ENCODE measurements at regions of chr3 and their contacts with region 1.

Region 1: DNA sequence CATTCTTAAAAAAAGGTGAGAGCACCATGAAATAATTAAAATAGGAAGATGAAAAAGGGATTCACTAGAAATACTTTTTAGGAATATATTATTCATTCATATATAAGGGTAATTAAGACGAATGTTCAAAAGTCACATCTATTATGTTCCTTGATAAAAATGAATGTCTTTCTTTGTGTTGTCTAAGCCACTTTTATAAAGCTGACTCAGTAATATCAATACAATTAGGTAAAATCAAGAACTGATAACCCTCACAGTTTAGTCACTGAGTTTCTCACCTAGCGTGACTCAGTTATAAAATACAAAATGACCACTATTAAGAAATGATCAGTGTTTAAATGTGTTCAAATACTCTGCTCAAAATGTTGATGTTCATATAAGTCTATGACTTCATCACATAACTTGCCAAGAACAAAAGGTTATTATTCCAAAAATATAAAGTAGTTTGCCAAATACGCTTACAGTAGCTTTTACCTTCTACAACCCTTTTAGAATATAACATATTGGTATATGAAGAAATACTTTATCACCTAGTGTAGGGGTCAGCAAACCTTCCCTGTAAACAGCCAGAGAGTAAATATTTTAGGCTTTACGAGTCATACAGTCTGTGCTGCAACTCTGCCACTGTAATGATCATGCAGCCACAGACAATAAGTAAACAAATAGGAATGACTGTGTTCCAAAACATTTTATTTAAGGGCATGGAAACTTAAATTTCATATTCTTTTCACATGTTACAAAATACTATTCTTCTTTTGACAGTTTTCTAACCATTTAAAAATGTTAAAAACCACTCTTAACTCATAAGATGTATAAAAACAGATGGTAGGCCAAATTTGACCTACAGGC is 369.8 kb downstream of the TBC1D5 start:
- ATAC-seq: no peak
- H3K4me3 ChIP-seq: no peak overlapping the region
- H3K27ac ChIP-seq: no peak overlapping the region
- H3K4me1 ChIP-seq: no peaks in the 10 kb centered on the region

Region 2: GRCh38 chr3:17313746-17314145 is 58.8 kb before region 1 on chr3:
- in situ Hi-C with region 1: loop called in 1 of 9 experiments (anchors 10 kb)
- ATAC-seq: no peak
- H3K4me3 ChIP-seq: no peak overlapping the region
- H3K27ac ChIP-seq: no peak overlapping the region
- H3K4me1 ChIP-seq: no peaks in the 10 kb centered on the region